AG04449 (cell line): ENCODE measurements at regions of chr7 and their contacts with region 1.

Region 1: GRCh38 chr7:31373337-31374289 is 33.1 kb upstream of the NEUROD6 start:
- DNase-seq: peak; percentile 3
- H3K4me3 ChIP-seq: no peak overlapping the region
- CTCF ChIP-seq: peak; percentile 64

Region 2: DNA sequence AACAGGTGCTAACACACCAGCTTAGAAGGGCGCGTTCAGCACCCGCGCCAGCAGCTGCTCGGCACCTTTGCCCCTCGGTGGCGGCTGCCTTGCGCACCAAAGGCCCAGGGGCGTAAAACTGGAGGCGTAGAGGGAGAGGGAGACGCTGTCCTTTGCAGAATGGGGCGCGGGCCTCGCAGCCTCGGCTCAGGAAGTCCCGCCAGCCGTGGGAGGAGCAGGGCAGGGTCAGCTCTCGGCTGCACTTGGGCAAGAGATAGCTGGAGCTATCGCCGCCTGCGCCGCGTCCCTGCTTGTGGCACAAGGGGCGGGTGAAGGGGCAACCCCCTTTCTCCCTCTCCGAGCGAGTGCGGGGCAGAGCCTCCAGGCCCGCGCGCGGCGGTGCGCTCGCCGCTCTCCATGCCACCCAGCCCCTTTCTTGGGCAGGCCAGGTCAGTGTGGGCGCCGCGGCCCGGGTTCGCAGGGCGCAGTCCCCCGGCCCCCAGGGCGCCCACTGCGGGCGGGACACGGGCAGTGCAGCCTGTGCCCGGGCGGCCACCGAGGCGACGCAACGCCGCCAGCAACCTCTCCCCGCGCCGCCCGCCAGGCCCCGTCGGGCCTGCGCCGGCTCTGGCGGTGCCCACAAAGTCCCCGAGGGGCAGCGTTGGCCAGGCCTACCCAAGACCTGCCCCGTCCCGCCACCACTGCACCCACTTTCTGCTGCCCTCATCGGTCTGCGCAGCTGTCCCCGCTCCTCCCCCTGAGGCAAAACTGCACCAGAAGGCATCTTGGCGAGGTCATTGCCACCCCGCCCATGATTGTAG is 37.2 kb before region 1 on chr7:
- CTCF ChIA-PET with region 1: no interaction called
- POLR2A ChIA-PET with region 1: no interaction called
- DNase-seq: no peak
- H3K4me3 ChIP-seq: no peak overlapping the region
- CTCF ChIP-seq: no peak

Region 3: DNA sequence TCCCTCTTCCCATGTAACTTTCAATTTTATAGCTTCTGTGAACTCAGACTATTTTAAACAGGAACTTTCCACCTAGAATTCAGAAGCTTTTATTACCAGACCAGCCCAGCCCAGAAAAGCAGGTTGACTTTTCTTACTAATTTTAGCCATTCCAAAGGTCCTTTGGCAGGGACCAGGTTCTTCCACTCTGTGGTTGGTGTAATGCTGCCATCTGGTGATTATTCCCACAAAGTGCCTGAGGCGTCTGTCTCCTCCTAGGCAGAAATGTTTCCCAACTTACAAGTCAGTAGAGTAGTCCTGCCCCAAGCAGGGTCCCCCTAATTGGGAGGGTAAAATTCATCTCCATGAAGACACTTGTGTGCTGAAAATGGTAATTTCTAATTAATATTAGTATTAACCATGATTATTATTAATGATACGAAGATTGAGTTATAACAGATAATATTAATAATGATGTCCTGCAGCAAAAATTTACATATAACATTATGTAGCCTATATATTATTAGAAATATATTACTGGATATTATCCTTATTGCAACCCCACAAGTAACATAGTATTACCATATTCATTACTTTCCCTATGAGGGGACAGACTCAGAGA is 260.4 kb after region 1 on chr7:
- CTCF ChIA-PET with region 1: interaction called, 18 read pairs
- POLR2A ChIA-PET with region 1: no interaction called
- DNase-seq: peak; percentile 19
- H3K4me3 ChIP-seq: no peak overlapping the region
- CTCF ChIP-seq: peak; percentile 52